GM12878 (cell line): ENCODE measurements at regions of chr18 and their contacts with region 1.

Region 1: DNA sequence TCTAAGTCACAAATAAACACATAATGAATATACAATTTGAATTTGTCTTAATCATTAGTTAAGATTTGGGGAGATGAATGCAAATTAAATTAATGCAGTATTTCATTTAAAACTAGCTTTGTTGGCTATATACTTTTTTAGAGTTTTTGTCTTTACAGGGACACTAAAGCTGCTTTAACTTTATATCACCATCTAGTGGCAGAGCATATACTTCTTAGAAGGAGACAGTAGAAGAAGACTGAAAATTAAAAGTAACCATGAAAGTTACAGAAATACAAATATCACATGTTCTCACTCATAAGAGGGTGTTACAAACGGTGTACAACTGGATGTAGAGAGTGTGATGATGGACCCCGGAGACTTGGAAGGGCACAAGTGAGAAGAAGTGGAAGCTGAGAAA is 268.3 kb upstream of the NETO1 start:
- DNase-seq: no peak
- ATAC-seq: peak; percentile 75
- H3K4me3 ChIP-seq: no peak overlapping the region
- H3K27ac ChIP-seq: no peak overlapping the region
- H3K4me1 ChIP-seq: no peaks in the 10 kb centered on the region
- H3K27me3 ChIP-seq: no peaks in the 10 kb centered on the region
- CTCF ChIP-seq: peak in 2 of 3 experiments; percentile 33 to 34; a peak in 3 of 6 replicates
- EP300 ChIP-seq: no peak
- POLR2A ChIP-seq: no peak
- RAD21 ChIP-seq: peak; percentile 66

Region 2: GRCh38 chr18:72700961-72701718 is 435.0 kb before region 1 on chr18:
- CTCF ChIA-PET with region 1: interaction called, 11 read pairs
- POLR2A ChIA-PET with region 1: no interaction called
- RAD21 ChIA-PET with region 1: interaction called, 3 read pairs
- SMC1A ChIA-PET with region 1: no interaction called
- in situ Hi-C with region 1: no loop called
- intact Hi-C with region 1: no loop called
- DNase-seq: no peak
- ATAC-seq: peak; percentile 64
- H3K4me3 ChIP-seq: no peak overlapping the region
- H3K27ac ChIP-seq: no peak overlapping the region
- H3K4me1 ChIP-seq: no peaks in the 10 kb centered on the region
- H3K27me3 ChIP-seq: no peaks in the 10 kb centered on the region
- CTCF ChIP-seq: peak in 2 of 3 experiments; percentile 27 to 46; a peak in 3 of 6 replicates
- EP300 ChIP-seq: no peak
- POLR2A ChIP-seq: no peak
- RAD21 ChIP-seq: peak; percentile 47

Region 3: DNA sequence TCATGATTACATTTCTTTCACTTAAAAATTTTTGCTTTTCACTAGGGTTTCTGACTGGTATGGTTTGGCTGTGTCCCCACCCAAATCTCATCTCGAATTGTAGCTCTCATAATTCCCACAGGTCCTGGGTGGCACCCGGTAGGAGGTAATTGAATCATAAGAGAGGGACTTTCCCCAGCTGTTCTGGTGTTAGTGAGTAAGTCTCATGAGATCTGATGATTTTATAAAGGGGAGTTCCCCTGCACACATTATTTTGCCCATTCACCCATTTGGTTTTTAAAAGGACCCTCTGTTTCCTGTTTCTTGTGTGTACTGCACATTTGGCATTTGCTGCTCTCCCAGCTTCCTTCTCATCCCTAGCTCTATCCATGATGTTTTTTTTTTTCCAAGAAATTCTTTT is 240.6 kb before region 1 on chr18:
- CTCF ChIA-PET with region 1: no interaction called
- POLR2A ChIA-PET with region 1: no interaction called
- RAD21 ChIA-PET with region 1: no interaction called
- SMC1A ChIA-PET with region 1: no interaction called
- in situ Hi-C with region 1: no loop called
- intact Hi-C with region 1: loop called (anchors 10 kb)
- DNase-seq: no peak
- ATAC-seq: no peak
- H3K4me3 ChIP-seq: no peak overlapping the region
- H3K27ac ChIP-seq: no peak overlapping the region
- H3K4me1 ChIP-seq: no peaks in the 10 kb centered on the region
- H3K27me3 ChIP-seq: no peaks in the 10 kb centered on the region
- CTCF ChIP-seq: no peak
- EP300 ChIP-seq: no peak
- POLR2A ChIP-seq: no peak
- RAD21 ChIP-seq: no peak

Region 4: DNA sequence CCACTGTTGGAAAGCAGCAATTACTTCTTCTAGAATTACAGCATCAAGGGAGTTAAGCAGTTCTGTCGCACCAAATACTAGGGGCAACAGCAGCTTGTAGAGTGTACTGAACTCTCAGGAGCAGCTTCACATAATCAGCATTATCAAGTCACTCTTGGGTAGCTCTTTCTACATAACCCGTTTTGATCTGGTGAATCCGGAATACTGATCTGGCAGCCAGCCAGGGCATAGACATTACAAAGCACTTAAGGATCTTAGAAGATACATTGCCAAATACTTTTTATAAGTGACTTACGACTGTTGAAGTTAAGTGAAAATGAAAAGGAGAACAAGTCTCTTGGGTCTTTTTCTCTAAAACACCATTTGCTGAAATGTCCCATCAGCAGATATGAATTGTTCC is 195.1 kb before region 1 on chr18:
- CTCF ChIA-PET with region 1: no interaction called
- POLR2A ChIA-PET with region 1: no interaction called
- RAD21 ChIA-PET with region 1: no interaction called
- SMC1A ChIA-PET with region 1: interaction called, 3 read pairs
- in situ Hi-C with region 1: no loop called
- intact Hi-C with region 1: loop called (anchors 10 kb)
- DNase-seq: no peak
- ATAC-seq: no peak
- H3K4me3 ChIP-seq: no peak overlapping the region
- H3K27ac ChIP-seq: no peak overlapping the region
- H3K4me1 ChIP-seq: no peaks in the 10 kb centered on the region
- H3K27me3 ChIP-seq: no peaks in the 10 kb centered on the region
- CTCF ChIP-seq: no peak
- EP300 ChIP-seq: no peak
- POLR2A ChIP-seq: no peak
- RAD21 ChIP-seq: no peak

Region 5: GRCh38 chr18:73007195-73007914 is 128.8 kb before region 1 on chr18:
- CTCF ChIA-PET with region 1: no interaction called
- POLR2A ChIA-PET with region 1: no interaction called
- RAD21 ChIA-PET with region 1: no interaction called
- SMC1A ChIA-PET with region 1: interaction called, 3 read pairs
- in situ Hi-C with region 1: no loop called
- intact Hi-C with region 1: loop called (anchors 10 kb)
- DNase-seq: peak; percentile 25
- ATAC-seq: peak; percentile 80
- H3K4me3 ChIP-seq: no peak overlapping the region
- H3K27ac ChIP-seq: peak overlapping the region; percentile 42; the same call in 1 of the 2 replicates
- H3K4me1 ChIP-seq: no peaks in the 10 kb centered on the region
- H3K27me3 ChIP-seq: no peaks in the 10 kb centered on the region
- CTCF ChIP-seq: no peak
- EP300 ChIP-seq: no peak
- POLR2A ChIP-seq: no peak
- RAD21 ChIP-seq: no peak

Region 6: GRCh38 chr18:73150199-73150598 is 14.1 kb after region 1 on chr18:
- CTCF ChIA-PET with region 1: interaction called, 16 read pairs
- POLR2A ChIA-PET with region 1: no interaction called
- RAD21 ChIA-PET with region 1: interaction called, 6 read pairs
- SMC1A ChIA-PET with region 1: interaction called, 17 read pairs
- in situ Hi-C with region 1: no loop called
- intact Hi-C with region 1: no loop called
- DNase-seq: no peak
- ATAC-seq: peak; percentile 86
- H3K4me3 ChIP-seq: no peak overlapping the region
- H3K27ac ChIP-seq: no peak overlapping the region
- H3K4me1 ChIP-seq: no peaks in the 10 kb centered on the region
- H3K27me3 ChIP-seq: no peaks in the 10 kb centered on the region
- CTCF ChIP-seq: no peak; a peak in 1 of 6 replicates
- EP300 ChIP-seq: peak in 1 of 2 experiments; percentile 38; a peak in 1 of 4 replicates
- POLR2A ChIP-seq: no peak
- RAD21 ChIP-seq: no peak

Region 7: DNA sequence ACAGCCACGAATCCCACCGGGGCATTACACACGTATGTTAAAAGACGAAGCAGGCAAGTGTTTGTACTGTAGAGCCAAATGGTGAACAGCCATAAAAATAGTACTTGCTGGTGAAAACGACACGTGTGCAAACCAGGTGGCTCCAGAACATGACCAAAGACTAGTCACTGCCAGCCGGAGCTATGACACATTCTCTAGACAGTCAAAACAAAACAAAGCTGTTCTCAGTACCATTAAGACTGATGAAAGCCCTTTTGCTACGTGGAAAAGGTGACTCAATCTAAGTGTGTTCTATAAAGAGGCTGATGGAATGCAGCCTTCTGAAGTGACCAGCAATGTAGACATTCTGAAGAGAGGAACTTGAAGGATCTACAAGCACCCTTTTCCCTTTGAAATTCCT is 99.4 kb after region 1 on chr18:
- CTCF ChIA-PET with region 1: no interaction called
- POLR2A ChIA-PET with region 1: no interaction called
- RAD21 ChIA-PET with region 1: no interaction called
- SMC1A ChIA-PET with region 1: no interaction called
- in situ Hi-C with region 1: no loop called
- intact Hi-C with region 1: no loop called
- DNase-seq: peak; percentile 11
- ATAC-seq: peak; percentile 92
- H3K4me3 ChIP-seq: no peak overlapping the region
- H3K27ac ChIP-seq: no peak overlapping the region
- H3K4me1 ChIP-seq: no peaks in the 10 kb centered on the region
- H3K27me3 ChIP-seq: no peaks in the 10 kb centered on the region
- CTCF ChIP-seq: no peak
- EP300 ChIP-seq: peak in 1 of 2 experiments; percentile 45; a peak in 1 of 4 replicates
- POLR2A ChIP-seq: no peak
- RAD21 ChIP-seq: no peak

Region 8: DNA sequence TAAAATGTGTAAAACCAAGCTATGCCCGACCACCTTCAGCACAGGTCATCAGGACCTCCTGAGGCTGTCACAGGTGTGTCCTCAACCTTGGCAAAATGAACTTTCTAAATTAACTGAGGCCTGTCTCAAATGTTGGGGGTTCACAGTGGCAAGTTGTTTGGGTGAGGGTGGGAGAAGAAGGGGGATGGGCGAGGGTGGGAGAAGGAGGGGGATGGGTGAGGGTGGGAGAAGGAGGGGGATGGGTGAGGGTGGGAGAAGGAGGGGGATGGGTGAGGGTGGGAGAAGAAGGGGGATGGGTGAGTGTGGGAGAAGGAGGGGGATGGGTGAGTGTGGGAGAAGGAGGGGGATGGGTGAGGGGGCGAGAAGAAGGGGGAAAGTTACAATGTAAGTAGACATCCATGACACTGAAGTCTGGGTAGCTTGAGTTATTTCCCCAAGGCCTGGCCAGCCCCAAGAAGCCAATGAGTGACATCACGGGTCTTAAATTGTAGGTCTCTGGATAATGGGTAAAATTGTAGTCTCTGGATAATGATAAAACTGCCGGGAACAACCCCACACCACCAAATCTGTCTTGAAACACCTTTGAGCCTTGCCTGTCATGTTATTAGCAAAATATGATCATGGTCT is 1068.5 kb after region 1 on chr18:
- CTCF ChIA-PET with region 1: no interaction called
- POLR2A ChIA-PET with region 1: no interaction called
- RAD21 ChIA-PET with region 1: no interaction called
- SMC1A ChIA-PET with region 1: no interaction called
- in situ Hi-C with region 1: no loop called
- intact Hi-C with region 1: no loop called
- DNase-seq: no peak
- ATAC-seq: no peak
- H3K4me3 ChIP-seq: no peak overlapping the region
- H3K27ac ChIP-seq: no peak overlapping the region
- H3K4me1 ChIP-seq: no peaks in the 10 kb centered on the region
- H3K27me3 ChIP-seq: no peaks in the 10 kb centered on the region
- CTCF ChIP-seq: no peak
- EP300 ChIP-seq: no peak
- POLR2A ChIP-seq: no peak
- RAD21 ChIP-seq: no peak